Naive thymus-derived CD4-positive, alpha-beta T cell (primary cell): ENCODE measurements at regions of chr5 and their contacts with region 1.

Region 1: DNA sequence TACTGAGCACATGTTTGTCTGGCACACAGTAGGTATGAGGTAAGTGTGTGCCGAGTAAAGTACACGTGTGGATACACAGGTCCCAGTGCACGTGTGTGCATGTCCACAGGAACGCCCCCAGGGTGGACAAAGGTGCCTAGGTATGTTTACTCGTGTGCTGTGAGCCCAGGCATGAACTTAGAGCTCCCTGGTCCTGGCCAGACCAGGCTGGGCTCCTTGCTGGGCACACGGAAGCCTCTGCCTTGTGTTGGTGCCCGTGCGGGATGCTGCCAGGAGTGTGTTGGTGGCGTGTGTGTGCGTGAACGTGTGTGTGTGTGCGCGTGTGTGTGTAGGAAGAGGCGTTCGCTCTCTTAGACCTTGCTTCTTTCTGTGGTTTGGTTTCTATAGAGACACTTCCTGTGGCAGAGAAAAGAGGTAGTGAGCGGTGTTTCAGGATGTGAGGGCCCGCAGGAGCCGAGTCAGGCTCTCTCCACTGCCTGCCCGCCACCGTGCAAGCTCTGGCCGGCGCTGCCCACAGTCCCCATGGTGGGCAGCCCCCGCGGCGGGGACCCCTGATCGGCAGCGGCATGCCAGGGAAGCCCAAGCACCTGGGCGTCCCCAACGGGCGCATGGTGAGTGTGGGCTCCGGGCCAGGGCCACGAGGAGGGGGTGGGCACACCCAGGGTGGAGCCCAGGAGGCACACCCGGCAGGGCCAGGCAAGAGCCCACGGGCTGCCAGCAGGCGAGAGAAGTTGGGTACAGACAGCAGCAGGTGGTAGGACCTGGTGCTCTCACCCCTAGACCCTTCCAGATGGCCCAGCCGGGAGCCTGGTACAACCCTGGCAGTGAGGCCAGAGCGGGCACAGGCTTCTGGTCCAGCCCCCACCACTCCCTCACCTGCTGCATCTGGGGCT is at the start of gene RGS14:
- DNase-seq: peak; percentile 50 to 90 (median 87)
- ATAC-seq: peak; percentile 95
- H3K4me3 ChIP-seq: peak within 1 kb of the TSS; percentile 70
- H3K4me3 Mint-ChIP-seq: peak within 1 kb of the TSS; percentile 83 to 97 (median 92)
- H3K27ac ChIP-seq: peak within 1 kb of the TSS; percentile 87
- H3K27ac Mint-ChIP-seq: peak within 1 kb of the TSS; percentile 80 to 98 (median 94)
- H3K4me1 ChIP-seq: peaks cover 47 to 56% of the 10 kb centered on the region in 2 donors
- H3K4me1 Mint-ChIP-seq: peaks cover 64 to 86% (median 74%) of the 10 kb centered on the region in 7 donors
- H3K27me3 ChIP-seq: no peaks in the 10 kb centered on the region
- H3K27me3 Mint-ChIP-seq: no peaks in the 10 kb centered on the region
- total RNA-seq, gene RGS14: 68.4 to 196 (median 112) TPM

Region 2: GRCh38 chr5:177049285-177049684 is 308.4 kb before region 1 on chr5:
- CTCF ChIA-PET with region 1: no interaction called
- POLR2A ChIA-PET with region 1: no interaction called
- intact Hi-C with region 1: no loop called
- DNase-seq: peak in 1 of 9 donors; percentile 3
- ATAC-seq: no peak
- H3K4me3 ChIP-seq: no peak overlapping the region
- H3K4me3 Mint-ChIP-seq: no peak overlapping the region
- H3K27ac ChIP-seq: no peak overlapping the region
- H3K27ac Mint-ChIP-seq: peak overlapping the region in 4 of 9 donors; percentile 4 to 65 (median 24)
- H3K4me1 ChIP-seq: no peaks in the 10 kb centered on the region
- H3K4me1 Mint-ChIP-seq: no peaks in the 10 kb centered on the region
- H3K27me3 ChIP-seq: no peaks in the 10 kb centered on the region
- H3K27me3 Mint-ChIP-seq: no peaks in the 10 kb centered on the region

Region 3: GRCh38 chr5:177370488-177371119 is 12.9 kb after region 1 on chr5:
- CTCF ChIA-PET with region 1: interaction called, 20 read pairs
- POLR2A ChIA-PET with region 1: interaction called, 123 read pairs
- intact Hi-C with region 1: loop called in 1 of 2 experiments (anchors 1 kb)
- DNase-seq: peak in 7 of 9 donors; percentile 36 to 74 (median 65)
- ATAC-seq: peak; percentile 90
- H3K4me3 ChIP-seq: no peak overlapping the region
- H3K4me3 Mint-ChIP-seq: peak overlapping the region in 7 of 10 donors; percentile 20 to 79 (median 64)
- H3K27ac ChIP-seq: peak overlapping the region; percentile 76
- H3K27ac Mint-ChIP-seq: peak overlapping the region in 7 of 9 donors; percentile 33 to 94 (median 86)
- H3K4me1 ChIP-seq: peaks cover 36 to 73% of the 10 kb centered on the region in 2 donors
- H3K4me1 Mint-ChIP-seq: peaks cover 51 to 80% (median 70%) of the 10 kb centered on the region in 7 donors
- H3K27me3 ChIP-seq: no peaks in the 10 kb centered on the region
- H3K27me3 Mint-ChIP-seq: no peaks in the 10 kb centered on the region

Region 4: GRCh38 chr5:177390363-177391300 is 32.9 kb after region 1 on chr5:
- CTCF ChIA-PET with region 1: interaction called, 25 read pairs
- POLR2A ChIA-PET with region 1: interaction called, 7 read pairs
- intact Hi-C with region 1: loop called in 1 of 2 experiments (anchors 1 kb)
- DNase-seq: peak; percentile 76 to 91 (median 88)
- ATAC-seq: peak; percentile 89
- H3K4me3 ChIP-seq: no peak overlapping the region
- H3K4me3 Mint-ChIP-seq: peak overlapping the region in 9 of 10 donors; percentile 29 to 68 (median 53)
- H3K27ac ChIP-seq: peak overlapping the region; percentile 63
- H3K27ac Mint-ChIP-seq: peak overlapping the region in 8 of 9 donors; percentile 65 to 86 (median 78)
- H3K4me1 ChIP-seq: peaks cover 31 to 33% of the 10 kb centered on the region in 2 donors
- H3K4me1 Mint-ChIP-seq: peaks cover 30 to 39% (median 34%) of the 10 kb centered on the region in 7 donors
- H3K27me3 ChIP-seq: no peaks in the 10 kb centered on the region
- H3K27me3 Mint-ChIP-seq: peaks cover 0 to 6% (median 0%) of the 10 kb centered on the region in 5 donors

Region 5: GRCh38 chr5:177554474-177555111 is 196.9 kb after region 1 on chr5 and contains the start of gene FAM193B:
- CTCF ChIA-PET with region 1: no interaction called
- POLR2A ChIA-PET with region 1: no interaction called
- intact Hi-C with region 1: loop called in 1 of 2 experiments (anchors 2 kb)
- DNase-seq: peak; percentile 93 to 96 (median 95)
- ATAC-seq: peak; percentile 99
- H3K4me3 ChIP-seq: peak within 1 kb of the TSS; percentile 68
- H3K4me3 Mint-ChIP-seq: peak within 1 kb of the TSS; percentile 81 to 92 (median 88)
- H3K27ac ChIP-seq: peak within 1 kb of the TSS; percentile 73
- H3K27ac Mint-ChIP-seq: peak within 1 kb of the TSS; percentile 63 to 90 (median 85)
- H3K4me1 ChIP-seq: peaks cover 10 to 17% of the 10 kb centered on the region in 2 donors
- H3K4me1 Mint-ChIP-seq: peaks cover 24 to 43% (median 35%) of the 10 kb centered on the region in 7 donors
- H3K27me3 ChIP-seq: no peaks in the 10 kb centered on the region
- H3K27me3 Mint-ChIP-seq: peaks cover 0 to 4% (median 0%) of the 10 kb centered on the region in 5 donors
- total RNA-seq, gene FAM193B: 102 to 275 (median 175) TPM